ENCODE measurements at regions of chr17 and their contacts with region 1.

Region 1: GRCh38 chr17:2386400-2387085 is 14.3 kb downstream of the MNT start:
- DNase-seq: peak in 1 of 2 experiments; percentile 42
- ATAC-seq: no peak
- H3K4me3 ChIP-seq: no peak overlapping the region
- H3K27ac ChIP-seq: no peak overlapping the region
- H3K4me1 ChIP-seq: peaks cover 11% of the 10 kb centered on the region
- CTCF ChIP-seq: no peak
- EP300 ChIP-seq: no peak
- POLR2A ChIP-seq: no peak
- RAD21 ChIP-seq: no peak

Region 2: DNA sequence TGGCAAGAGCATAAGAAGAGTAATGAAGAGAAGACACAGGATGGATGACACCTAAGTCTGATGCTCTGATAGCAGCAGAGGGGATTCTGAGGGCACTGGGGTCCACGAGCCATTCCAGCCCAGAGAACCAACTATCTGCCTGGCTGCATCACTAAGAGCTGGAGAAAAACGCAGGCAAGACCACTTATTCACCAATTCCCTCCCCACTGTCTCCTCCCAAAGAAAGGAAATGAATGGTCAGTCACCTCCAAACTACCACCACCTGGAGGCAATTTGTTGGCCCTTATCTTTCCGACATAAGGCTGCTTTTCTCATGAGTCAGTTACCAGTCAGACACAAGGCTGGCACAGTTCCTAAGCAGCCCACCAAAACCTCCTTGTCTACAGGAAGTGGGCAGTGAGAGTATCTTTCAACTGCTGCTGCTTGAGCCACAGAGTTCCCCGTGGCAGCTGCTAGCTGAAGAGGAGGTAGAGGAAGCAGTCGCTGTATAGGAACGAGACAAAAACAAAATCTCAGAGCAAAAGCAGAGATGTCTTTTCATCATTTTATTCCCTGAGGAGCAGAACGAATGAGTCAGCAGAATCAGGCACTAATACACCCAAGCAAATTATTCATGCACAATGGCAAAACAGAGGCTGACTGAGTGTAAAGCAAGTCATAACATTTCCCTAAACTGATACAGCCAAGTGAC is 194.0 kb before region 1 on chr17:
- CTCF ChIA-PET with region 1: no interaction called
- POLR2A ChIA-PET with region 1: no interaction called
- DNase-seq: peak; percentile 54 to 76
- ATAC-seq: peak; percentile 75 to 84
- H3K4me3 ChIP-seq: no peak overlapping the region
- H3K27ac ChIP-seq: peak overlapping the region; percentile 69 to 80
- H3K4me1 ChIP-seq: peaks cover 38% of the 10 kb centered on the region
- CTCF ChIP-seq: no peak
- EP300 ChIP-seq: no peak
- POLR2A ChIP-seq: no peak
- RAD21 ChIP-seq: no peak

Region 3: GRCh38 chr17:2336215-2336851 is 50.2 kb before region 1 on chr17 and contains the start of gene TSR1:
- CTCF ChIA-PET with region 1: interaction called, 43 read pairs
- POLR2A ChIA-PET with region 1: no interaction called
- DNase-seq: peak; percentile 94 to 99
- ATAC-seq: peak; percentile 92 to 97
- H3K4me3 ChIP-seq: peak within 1 kb of the TSS; percentile 99
- H3K27ac ChIP-seq: peak within 1 kb of the TSS; percentile 94 to 99
- H3K4me1 ChIP-seq: peaks cover 20% of the 10 kb centered on the region
- CTCF ChIP-seq: peak; percentile 38
- EP300 ChIP-seq: no peak
- POLR2A ChIP-seq: peak; percentile 83
- RAD21 ChIP-seq: peak in 1 of 2 experiments; percentile 19; a peak in 2 of 5 replicates
- polyA plus RNA-seq, gene TSR1: 38.3 and 45.7 TPM in 2 replicates

Region 4: GRCh38 chr17:2369551-2370210 is 16.9 kb before region 1 on chr17:
- CTCF ChIA-PET with region 1: interaction called, 255 read pairs
- POLR2A ChIA-PET with region 1: no interaction called
- DNase-seq: no peak
- ATAC-seq: peak; percentile 9 to 41; a peak in 3 of 6 replicates
- H3K4me3 ChIP-seq: no peak overlapping the region
- H3K27ac ChIP-seq: no peak overlapping the region
- H3K4me1 ChIP-seq: no peaks in the 10 kb centered on the region
- CTCF ChIP-seq: no peak
- EP300 ChIP-seq: no peak
- POLR2A ChIP-seq: no peak
- RAD21 ChIP-seq: peak in 1 of 2 experiments; percentile 38; a peak in 1 of 5 replicates

Region 5: DNA sequence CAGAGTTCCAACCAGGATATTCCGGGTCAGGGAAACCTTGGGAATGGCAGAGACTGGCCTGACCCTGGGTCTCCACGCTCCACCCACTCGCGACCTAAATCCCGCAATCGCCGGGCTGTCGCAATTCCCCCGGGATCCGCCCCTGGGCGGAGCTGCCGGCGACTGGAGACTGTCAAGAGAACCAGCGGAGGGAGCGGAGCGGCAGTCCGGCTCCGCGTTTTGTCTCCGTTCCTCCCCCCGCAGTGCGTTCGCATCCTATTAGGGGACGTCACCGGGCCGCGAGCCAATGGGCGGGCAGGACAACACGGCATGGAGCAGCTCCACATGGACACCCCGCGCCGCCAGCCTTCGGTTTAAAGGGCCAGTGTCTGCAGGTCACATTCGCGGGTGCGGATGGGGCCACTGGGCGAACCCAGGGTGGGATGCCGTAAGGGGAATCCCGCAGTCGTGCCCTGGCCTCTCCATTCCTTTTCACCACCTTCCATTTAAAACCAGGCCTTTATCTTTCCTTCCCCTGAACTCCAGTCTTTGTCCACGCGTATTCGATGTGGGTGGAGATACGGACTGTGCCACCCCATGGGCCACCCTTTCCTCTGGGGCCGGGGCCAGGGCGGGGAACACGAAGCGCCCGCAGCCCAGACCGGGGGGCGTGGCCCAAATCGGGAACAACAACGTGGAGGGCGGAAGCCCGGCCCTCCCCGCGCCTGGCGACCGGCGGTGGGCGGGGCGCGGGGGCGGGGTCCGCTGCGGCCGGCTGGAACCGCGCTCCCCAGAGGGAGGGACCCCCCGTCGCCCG is 15.1 kb after region 1 on chr17:
- CTCF ChIA-PET with region 1: interaction called, 1,099 read pairs
- POLR2A ChIA-PET with region 1: interaction called, 51 read pairs
- DNase-seq: peak; percentile 98 to 100
- ATAC-seq: peak; percentile 23 to 64
- H3K4me3 ChIP-seq: peak overlapping the region; percentile 99
- H3K27ac ChIP-seq: peak overlapping the region; percentile 95 to 97
- H3K4me1 ChIP-seq: peaks cover 60% of the 10 kb centered on the region
- CTCF ChIP-seq: no peak
- EP300 ChIP-seq: no peak
- POLR2A ChIP-seq: no peak
- RAD21 ChIP-seq: no peak

Region 6: DNA sequence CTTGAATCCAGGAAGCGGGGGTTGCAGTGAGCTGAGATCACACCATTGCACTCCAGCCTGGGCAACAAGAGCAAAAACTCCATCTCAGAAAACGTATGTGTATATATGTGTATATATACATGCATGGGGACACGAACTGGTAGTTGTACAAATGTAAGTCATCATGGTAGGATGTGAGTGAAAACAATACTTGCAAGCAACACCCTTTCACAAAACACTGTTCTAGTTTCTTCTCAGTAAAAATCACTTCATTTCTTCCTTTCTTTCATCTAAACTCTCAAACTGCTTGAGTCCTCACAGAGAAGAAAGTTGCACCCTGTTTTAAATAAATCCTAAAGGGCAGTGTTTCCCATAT is 73.4 kb after region 1 on chr17:
- CTCF ChIA-PET with region 1: interaction called, 14 read pairs
- POLR2A ChIA-PET with region 1: no interaction called
- DNase-seq: no peak
- ATAC-seq: no peak
- H3K4me3 ChIP-seq: no peak overlapping the region
- H3K27ac ChIP-seq: peak overlapping the region in 1 of 2 experiments; percentile 61; a peak in 3 of 6 replicates
- H3K4me1 ChIP-seq: peaks cover 18% of the 10 kb centered on the region
- CTCF ChIP-seq: no peak
- EP300 ChIP-seq: no peak
- POLR2A ChIP-seq: no peak
- RAD21 ChIP-seq: no peak

Region 7: DNA sequence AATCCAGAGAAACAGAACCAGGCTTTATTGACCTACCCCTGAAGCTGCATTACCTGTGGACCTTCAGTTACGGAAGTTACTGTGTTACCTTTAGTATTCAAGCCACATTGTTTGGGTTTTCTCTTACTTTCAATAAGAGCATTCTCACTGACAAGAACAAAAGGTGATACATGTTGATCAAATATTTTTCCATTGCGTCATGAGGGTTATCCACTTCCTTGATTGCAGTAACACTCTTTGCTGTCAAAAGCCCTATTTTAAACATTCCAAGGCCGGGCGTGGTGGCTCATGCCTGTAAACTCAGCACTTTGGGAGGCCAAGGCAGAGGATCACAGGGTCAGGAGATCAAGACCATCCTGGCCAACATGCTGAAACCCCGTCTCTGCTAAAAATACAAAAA is 178.3 kb after region 1 on chr17:
- CTCF ChIA-PET with region 1: no interaction called
- POLR2A ChIA-PET with region 1: no interaction called
- DNase-seq: peak in 1 of 2 experiments; percentile 77
- ATAC-seq: peak; percentile 50 to 65; a peak in 3 of 6 replicates
- H3K4me3 ChIP-seq: no peak overlapping the region
- H3K27ac ChIP-seq: peak overlapping the region; percentile 34 to 48; a peak in 5 of 6 replicates
- H3K4me1 ChIP-seq: peaks cover 13% of the 10 kb centered on the region
- CTCF ChIP-seq: no peak
- EP300 ChIP-seq: no peak
- POLR2A ChIP-seq: no peak
- RAD21 ChIP-seq: no peak